CD4-positive, alpha-beta T cell (primary cell): ENCODE measurements at regions of chr2 and their contacts with region 1.

Region 1: GRCh38 chr2:177332041-177332991 is 60.3 kb upstream of the AGPS start:
- DNase-seq: peak in 12 of 14 experiments; percentile 9 to 81 (median 22)
- ATAC-seq: peak; percentile 88
- H3K4me3 ChIP-seq: no peak overlapping the region
- H3K4me3 Mint-ChIP-seq: peak overlapping the region; percentile 1
- H3K27ac ChIP-seq: no peak overlapping the region
- H3K27ac Mint-ChIP-seq: no peak overlapping the region
- H3K4me1 ChIP-seq: peaks cover 7% of the 10 kb centered on the region
- H3K4me1 Mint-ChIP-seq: peaks cover 10% of the 10 kb centered on the region
- H3K27me3 ChIP-seq: no peaks in the 10 kb centered on the region
- H3K27me3 Mint-ChIP-seq: no peaks in the 10 kb centered on the region
- CTCF ChIP-seq: peak; percentile 72

Region 2: DNA sequence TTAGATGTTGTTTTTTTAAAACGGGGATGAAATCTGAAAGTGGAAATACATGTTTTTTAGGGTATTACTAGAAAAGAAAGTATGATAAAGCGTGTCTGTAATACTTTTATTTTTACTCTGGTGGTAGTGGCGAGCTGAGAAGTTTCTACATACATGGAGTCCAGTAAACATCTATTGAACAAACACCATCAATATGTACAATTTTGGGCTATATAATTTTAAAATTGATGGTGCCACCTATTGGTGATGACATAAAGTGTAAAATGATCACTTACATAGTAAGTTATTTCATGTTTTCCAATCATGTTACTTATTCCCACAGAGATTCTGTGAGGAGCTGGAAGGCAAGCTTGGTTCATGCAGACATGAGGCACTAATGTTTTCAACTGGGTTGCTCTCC is 36.3 kb before region 1 on chr2:
- CTCF ChIA-PET with region 1: interaction called, 3 read pairs
- POLR2A ChIA-PET with region 1: no interaction called
- intact Hi-C with region 1: loop called in 1 of 2 experiments (anchors 2 kb)
- DNase-seq: peak in 3 of 14 experiments; percentile 50 to 67 (median 65)
- ATAC-seq: peak; percentile 60
- H3K4me3 ChIP-seq: no peak overlapping the region
- H3K4me3 Mint-ChIP-seq: no peak overlapping the region
- H3K27ac ChIP-seq: no peak overlapping the region
- H3K27ac Mint-ChIP-seq: no peak overlapping the region
- H3K4me1 ChIP-seq: peaks cover 1% of the 10 kb centered on the region
- H3K4me1 Mint-ChIP-seq: peaks cover 21% of the 10 kb centered on the region
- H3K27me3 ChIP-seq: no peaks in the 10 kb centered on the region
- H3K27me3 Mint-ChIP-seq: no peaks in the 10 kb centered on the region
- CTCF ChIP-seq: peak; percentile 77

Region 3: DNA sequence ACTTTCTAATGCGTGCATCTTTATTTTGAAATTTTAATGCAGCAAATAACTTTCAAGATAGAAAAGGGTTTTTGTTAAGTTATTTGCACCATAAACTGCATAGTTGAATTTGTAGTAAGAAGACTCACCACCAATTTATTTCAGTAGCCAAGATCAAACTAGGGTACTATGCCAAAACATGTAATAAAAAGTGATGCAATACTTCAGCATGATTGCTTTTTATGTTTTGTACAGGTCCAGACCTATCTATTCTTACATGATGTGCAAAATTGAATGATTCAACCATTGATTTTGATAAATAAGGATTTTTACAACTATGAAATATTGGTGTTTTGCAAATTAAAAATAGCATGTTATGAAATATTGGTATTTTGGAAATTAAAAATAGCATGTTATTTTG is 87.0 kb after region 1 on chr2:
- CTCF ChIA-PET with region 1: interaction called, 10 read pairs
- POLR2A ChIA-PET with region 1: no interaction called
- intact Hi-C with region 1: loop called (anchors 1 kb)
- DNase-seq: no peak
- ATAC-seq: no peak
- H3K4me3 ChIP-seq: no peak overlapping the region
- H3K4me3 Mint-ChIP-seq: no peak overlapping the region
- H3K27ac ChIP-seq: no peak overlapping the region
- H3K27ac Mint-ChIP-seq: no peak overlapping the region
- H3K4me1 ChIP-seq: no peaks in the 10 kb centered on the region
- H3K4me1 Mint-ChIP-seq: peaks cover 29% of the 10 kb centered on the region
- H3K27me3 ChIP-seq: no peaks in the 10 kb centered on the region
- H3K27me3 Mint-ChIP-seq: no peaks in the 10 kb centered on the region
- CTCF ChIP-seq: no peak

Region 4: GRCh38 chr2:177604271-177605065 is 272.2 kb after region 1 on chr2:
- CTCF ChIA-PET with region 1: no interaction called
- POLR2A ChIA-PET with region 1: no interaction called
- intact Hi-C with region 1: loop called (anchors 2 to 10 kb)
- DNase-seq: peak in 3 of 14 experiments; percentile 5 to 40 (median 38)
- ATAC-seq: no peak
- H3K4me3 ChIP-seq: no peak overlapping the region
- H3K4me3 Mint-ChIP-seq: no peak overlapping the region
- H3K27ac ChIP-seq: no peak overlapping the region
- H3K27ac Mint-ChIP-seq: no peak overlapping the region
- H3K4me1 ChIP-seq: no peaks in the 10 kb centered on the region
- H3K4me1 Mint-ChIP-seq: no peaks in the 10 kb centered on the region
- H3K27me3 ChIP-seq: peaks cover 0 to 2% of the 10 kb centered on the region in 2 experiments
- H3K27me3 Mint-ChIP-seq: peaks cover 17% of the 10 kb centered on the region
- CTCF ChIP-seq: peak; percentile 44

Region 5: GRCh38 chr2:177763532-177764265 is 431.4 kb after region 1 on chr2:
- CTCF ChIA-PET with region 1: no interaction called
- POLR2A ChIA-PET with region 1: no interaction called
- intact Hi-C with region 1: loop called (anchors 1 to 2 kb)
- DNase-seq: peak; percentile 59 to 85 (median 70)
- ATAC-seq: peak; percentile 98
- H3K4me3 ChIP-seq: no peak overlapping the region
- H3K4me3 Mint-ChIP-seq: no peak overlapping the region
- H3K27ac ChIP-seq: no peak overlapping the region
- H3K27ac Mint-ChIP-seq: no peak overlapping the region
- H3K4me1 ChIP-seq: peaks cover 6% of the 10 kb centered on the region
- H3K4me1 Mint-ChIP-seq: peaks cover 3% of the 10 kb centered on the region
- H3K27me3 ChIP-seq: no peaks in the 10 kb centered on the region
- H3K27me3 Mint-ChIP-seq: peaks cover 32% of the 10 kb centered on the region
- CTCF ChIP-seq: peak; percentile 87